MCF 10A (cell line): ENCODE measurements at regions of chr11 and their contacts with region 1.

Region 1: GRCh38 chr11:76721755-76722677 is 51.5 kb upstream of the LRRC32 start:
- DNase-seq: peak; percentile 75
- H3K4me3 Mint-ChIP-seq: no peak overlapping the region
- H3K27ac Mint-ChIP-seq: no peak overlapping the region
- H3K4me1 Mint-ChIP-seq: no peaks in the 10 kb centered on the region
- H3K27me3 Mint-ChIP-seq: peaks cover 36% of the 10 kb centered on the region
- CTCF ChIP-seq: peak; percentile 81

Region 2: DNA sequence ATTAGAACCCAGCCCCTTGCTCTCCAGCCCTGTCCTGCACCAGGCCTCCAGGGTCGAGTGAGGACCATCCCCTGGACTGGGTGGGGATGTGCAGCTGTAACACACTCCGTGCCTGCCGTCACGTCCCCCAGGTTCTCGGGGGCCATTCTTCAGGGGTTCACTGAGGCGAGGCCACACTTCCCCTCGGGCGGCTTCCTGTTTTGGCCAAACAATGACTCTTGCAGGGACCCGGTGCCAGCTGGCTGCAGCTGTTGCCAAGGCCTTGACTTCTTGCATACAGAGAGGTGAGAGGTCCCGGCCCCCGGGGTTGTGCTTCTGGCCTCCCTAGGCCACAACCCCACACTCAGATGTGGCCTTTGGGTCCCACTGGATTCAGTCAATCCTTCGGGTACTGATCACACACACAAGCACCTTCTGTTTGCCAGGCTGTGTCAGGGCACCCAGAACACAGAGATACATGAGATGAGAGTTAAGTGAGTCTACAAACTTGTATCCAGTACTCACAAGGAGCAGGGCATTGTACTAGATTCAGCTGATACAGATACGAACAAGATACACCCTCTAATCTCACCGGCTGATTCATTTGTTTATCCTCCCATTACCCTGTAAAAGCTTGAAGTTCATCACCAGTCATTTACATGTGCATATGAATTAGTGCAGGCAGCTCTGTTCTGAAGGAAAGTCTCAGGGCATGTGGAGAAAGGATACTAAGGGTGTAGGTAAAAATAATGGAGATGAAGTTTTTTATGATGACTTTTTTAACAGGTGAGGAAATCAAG is 84.3 kb before region 1 on chr11:
- CTCF ChIA-PET with region 1: no interaction called
- POLR2A ChIA-PET with region 1: no interaction called
- intact Hi-C with region 1: no loop called
- DNase-seq: no peak
- H3K4me3 Mint-ChIP-seq: no peak overlapping the region
- H3K27ac Mint-ChIP-seq: no peak overlapping the region
- H3K4me1 Mint-ChIP-seq: no peaks in the 10 kb centered on the region
- H3K27me3 Mint-ChIP-seq: peaks cover 54% of the 10 kb centered on the region
- CTCF ChIP-seq: no peak

Region 3: GRCh38 chr11:76706672-76707071 is 15.3 kb before region 1 on chr11:
- CTCF ChIA-PET with region 1: interaction called, 14 read pairs
- POLR2A ChIA-PET with region 1: no interaction called
- intact Hi-C with region 1: no loop called
- DNase-seq: no peak
- H3K4me3 Mint-ChIP-seq: no peak overlapping the region
- H3K27ac Mint-ChIP-seq: no peak overlapping the region
- H3K4me1 Mint-ChIP-seq: no peaks in the 10 kb centered on the region
- H3K27me3 Mint-ChIP-seq: peaks cover 20% of the 10 kb centered on the region
- CTCF ChIP-seq: no peak

Region 4: GRCh38 chr11:77487790-77488189 is 765.8 kb after region 1 on chr11:
- CTCF ChIA-PET with region 1: no interaction called
- POLR2A ChIA-PET with region 1: no interaction called
- intact Hi-C with region 1: no loop called
- DNase-seq: no peak
- H3K4me3 Mint-ChIP-seq: no peak overlapping the region
- H3K27ac Mint-ChIP-seq: no peak overlapping the region
- H3K4me1 Mint-ChIP-seq: no peaks in the 10 kb centered on the region
- H3K27me3 Mint-ChIP-seq: no peaks in the 10 kb centered on the region
- CTCF ChIP-seq: no peak